Naive thymus-derived CD8-positive, alpha-beta T cell (primary cell): ENCODE measurements at regions of chr10 and their contacts with region 1.

Region 1: DNA sequence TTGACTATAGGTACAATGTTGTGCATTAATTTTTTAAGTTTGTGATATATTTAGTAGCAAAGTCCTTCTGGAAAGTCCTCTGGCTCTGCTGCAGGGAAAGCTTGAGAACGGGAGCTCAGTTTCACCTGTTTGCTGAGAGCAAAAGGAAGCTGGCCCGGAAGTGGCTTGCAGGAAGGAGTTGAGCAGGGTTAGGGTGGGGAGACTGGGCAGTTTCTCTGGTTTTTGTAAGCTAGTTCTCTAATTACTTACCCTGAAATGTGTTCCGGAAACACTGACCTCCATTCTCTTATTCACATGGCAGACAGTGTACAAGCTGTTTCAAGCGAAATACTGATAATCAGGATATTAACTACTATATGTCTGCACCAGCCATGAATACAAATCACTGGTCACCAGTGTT is 22.3 kb downstream of the MAP3K8 start:
- DNase-seq: peak in 3 of 10 donors; percentile 10 to 24 (median 22)
- ATAC-seq: peak; percentile 82 to 83
- H3K4me3 Mint-ChIP-seq: peak overlapping the region; percentile 63 to 82 (median 77)
- H3K27ac Mint-ChIP-seq: peak overlapping the region; percentile 60 to 89 (median 82)
- H3K4me1 Mint-ChIP-seq: peaks cover 15 to 50% (median 29%) of the 10 kb centered on the region in 4 donors
- H3K27me3 Mint-ChIP-seq: no peaks in the 10 kb centered on the region

Region 2: GRCh38 chr10:30433730-30434272 is 22.5 kb before region 1 on chr10 and contains the start of gene MAP3K8:
- POLR2A ChIA-PET with region 1: interaction called, 11 read pairs
- DNase-seq: peak; percentile 61 to 84 (median 72)
- ATAC-seq: peak; percentile 78 to 80
- H3K4me3 Mint-ChIP-seq: peak within 1 kb of the TSS; percentile 76 to 92 (median 88)
- H3K27ac Mint-ChIP-seq: peak within 1 kb of the TSS; percentile 32 to 93 (median 76)
- H3K4me1 Mint-ChIP-seq: peaks cover 24 to 67% (median 46%) of the 10 kb centered on the region in 4 donors
- H3K27me3 Mint-ChIP-seq: no peaks in the 10 kb centered on the region
- polyA plus RNA-seq, gene MAP3K8: 0.53 to 23.4 (median 0.80) TPM